H1 (cell line): ENCODE measurements at regions of chr17 and their contacts with region 1.

Region 1: GRCh38 chr17:41695954-41696756 is 7.5 kb downstream of the EIF1 start:
- DNase-seq: peak in 1 of 2 experiments; percentile 66
- H3K4me3 ChIP-seq: no peak overlapping the region
- H3K27ac ChIP-seq: no peak overlapping the region
- H3K4me1 ChIP-seq: peaks cover 0 to 1% (median 0%) of the 10 kb centered on the region in 4 experiments; a peak in 1 of 7 replicates
- H3K27me3 ChIP-seq: no peaks in the 10 kb centered on the region; a peak in 1 of 7 replicates
- CTCF ChIP-seq: peak in 2 of 3 experiments; percentile 64 to 85; a peak in 3 of 4 replicates
- EP300 ChIP-seq: no peak
- POLR2A ChIP-seq: no peak
- RAD21 ChIP-seq: peak; percentile 35 to 51

Region 2: GRCh38 chr17:41486809-41487720 is 209.1 kb before region 1 on chr17:
- CTCF ChIA-PET with region 1: no interaction called
- POLR2A ChIA-PET with region 1: no interaction called
- DNase-seq: peak; percentile 59 to 97
- H3K4me3 ChIP-seq: no peak overlapping the region
- H3K27ac ChIP-seq: no peak overlapping the region
- H3K4me1 ChIP-seq: no peaks in the 10 kb centered on the region; a peak in 2 of 7 replicates
- H3K27me3 ChIP-seq: peaks cover 0 to 12% (median 6%) of the 10 kb centered on the region in 4 experiments; a peak in 6 of 7 replicates
- CTCF ChIP-seq: peak; percentile 90 to 98 (median 93)
- EP300 ChIP-seq: no peak
- POLR2A ChIP-seq: no peak
- RAD21 ChIP-seq: peak; percentile 75 to 83

Region 3: GRCh38 chr17:41678907-41679739 is 17.0 kb before region 1 on chr17:
- CTCF ChIA-PET with region 1: interaction called, 22 read pairs
- POLR2A ChIA-PET with region 1: interaction called, 233 read pairs
- DNase-seq: no peak
- H3K4me3 ChIP-seq: no peak overlapping the region
- H3K27ac ChIP-seq: no peak overlapping the region
- H3K4me1 ChIP-seq: peaks cover 2 to 22% (median 11%) of the 10 kb centered on the region in 4 experiments; a peak in 6 of 7 replicates
- H3K27me3 ChIP-seq: no peaks in the 10 kb centered on the region
- CTCF ChIP-seq: peak in 2 of 3 experiments; percentile 24 to 28; a peak in 1 of 4 replicates
- EP300 ChIP-seq: no peak
- POLR2A ChIP-seq: no peak
- RAD21 ChIP-seq: 0 out of 4 replicates have a peak, but pooled peaks of 1 of the 2 experiments have one; percentile 23

Region 4: GRCh38 chr17:41717408-41718286 is 21.5 kb after region 1 on chr17:
- CTCF ChIA-PET with region 1: interaction called, 20 read pairs
- POLR2A ChIA-PET with region 1: interaction called, 378 read pairs
- DNase-seq: no peak
- H3K4me3 ChIP-seq: no peak overlapping the region
- H3K27ac ChIP-seq: no peak overlapping the region
- H3K4me1 ChIP-seq: peaks cover 0 to 2% (median 0%) of the 10 kb centered on the region in 4 experiments; a peak in 2 of 7 replicates
- H3K27me3 ChIP-seq: peaks cover 0 to 8% (median 3%) of the 10 kb centered on the region in 4 experiments; a peak in 5 of 7 replicates
- CTCF ChIP-seq: no peak
- EP300 ChIP-seq: no peak
- POLR2A ChIP-seq: no peak
- RAD21 ChIP-seq: no peak